Activated CD4-positive, alpha-beta memory T cell treated with anti-CD3 and anti-CD28 coated beads for 36 hours (primary cell): ENCODE measurements at regions of chr17 and their contacts with region 1.

Region 1: DNA sequence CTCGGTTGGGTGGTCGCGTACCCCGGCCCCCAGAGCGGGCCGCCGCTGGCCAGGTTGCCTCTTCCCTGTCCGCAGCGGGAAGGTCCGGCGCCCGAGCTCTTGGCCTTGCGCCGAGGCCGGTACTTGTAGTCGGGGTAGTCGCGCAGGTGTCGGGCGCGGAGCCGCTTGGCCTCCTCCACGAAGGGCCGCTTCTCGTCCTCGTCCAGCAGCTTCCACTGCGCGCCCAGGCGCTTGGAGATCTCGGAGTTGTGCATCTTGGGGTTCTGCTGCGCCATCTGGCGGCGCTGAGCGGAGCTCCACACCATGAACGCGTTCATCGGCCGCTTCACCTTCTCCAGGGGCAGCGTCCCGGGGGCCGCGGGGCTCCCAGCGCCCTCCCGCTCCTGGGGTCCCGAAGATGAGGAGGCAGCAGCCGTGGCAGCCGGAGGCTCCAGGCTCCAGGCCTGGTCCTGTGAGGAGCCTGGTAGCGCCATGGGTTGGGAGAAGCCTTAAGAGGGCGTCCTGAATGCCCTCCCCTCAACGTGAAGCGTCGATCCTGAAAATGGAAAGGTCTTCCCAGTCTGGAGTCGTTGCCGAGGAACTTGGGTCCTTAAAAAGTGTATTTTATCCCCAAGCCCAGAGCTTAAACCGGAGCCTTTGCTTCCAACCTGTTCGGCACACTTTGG is 558 bp downstream of the SOX15 start:
- DNase-seq: peak; percentile 74
- H3K4me3 Mint-ChIP-seq: no peak overlapping the region
- H3K27ac Mint-ChIP-seq: no peak overlapping the region
- H3K4me1 Mint-ChIP-seq: peaks cover 10% of the 10 kb centered on the region
- H3K27me3 Mint-ChIP-seq: no peaks in the 10 kb centered on the region

Region 2: DNA sequence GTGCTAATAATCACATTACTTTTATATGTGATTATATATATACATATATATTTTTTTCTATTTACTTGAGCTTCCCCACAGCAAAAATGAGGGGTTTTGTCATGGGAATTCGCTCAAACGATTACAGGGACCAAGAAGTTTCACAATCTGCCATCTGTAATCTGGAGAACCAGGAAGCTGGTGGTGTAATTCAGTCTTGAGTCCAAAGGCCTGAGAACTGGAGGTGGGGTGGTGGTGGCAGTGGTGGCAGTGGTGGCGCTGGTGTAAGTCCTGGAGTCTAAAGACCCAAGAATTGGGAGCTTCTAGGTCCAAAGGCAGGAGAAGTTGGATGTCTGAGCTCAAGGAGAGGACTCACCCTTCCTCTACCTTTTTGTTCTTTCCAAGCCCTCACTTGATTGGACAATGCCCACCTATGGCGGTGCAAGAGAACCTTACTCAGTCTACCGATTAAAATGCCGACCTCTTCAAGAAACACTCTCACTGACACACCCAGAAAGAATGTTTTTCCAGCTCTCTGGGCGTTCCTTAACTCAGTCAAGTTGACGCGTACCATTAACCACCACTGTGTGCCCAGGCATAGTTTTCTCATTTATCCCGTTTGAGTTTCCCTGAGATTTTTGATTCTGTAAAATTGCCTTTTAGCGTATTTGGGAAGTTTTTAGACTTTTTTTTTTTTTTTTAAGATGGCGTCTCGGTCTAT is 73.3 kb before region 1 on chr17:
- CTCF ChIA-PET with region 1: interaction called, 28 read pairs
- POLR2A ChIA-PET with region 1: no interaction called
- intact Hi-C with region 1: no loop called
- DNase-seq: no peak
- H3K4me3 Mint-ChIP-seq: no peak overlapping the region
- H3K27ac Mint-ChIP-seq: no peak overlapping the region
- H3K4me1 Mint-ChIP-seq: no peaks in the 10 kb centered on the region
- H3K27me3 Mint-ChIP-seq: no peaks in the 10 kb centered on the region

Region 3: GRCh38 chr17:7606280-7606679 is 16.9 kb after region 1 on chr17:
- CTCF ChIA-PET with region 1: interaction called, 10 read pairs
- POLR2A ChIA-PET with region 1: no interaction called
- intact Hi-C with region 1: no loop called
- DNase-seq: no peak
- H3K4me3 Mint-ChIP-seq: no peak overlapping the region
- H3K27ac Mint-ChIP-seq: no peak overlapping the region
- H3K4me1 Mint-ChIP-seq: peaks cover 15% of the 10 kb centered on the region
- H3K27me3 Mint-ChIP-seq: no peaks in the 10 kb centered on the region

Region 4: DNA sequence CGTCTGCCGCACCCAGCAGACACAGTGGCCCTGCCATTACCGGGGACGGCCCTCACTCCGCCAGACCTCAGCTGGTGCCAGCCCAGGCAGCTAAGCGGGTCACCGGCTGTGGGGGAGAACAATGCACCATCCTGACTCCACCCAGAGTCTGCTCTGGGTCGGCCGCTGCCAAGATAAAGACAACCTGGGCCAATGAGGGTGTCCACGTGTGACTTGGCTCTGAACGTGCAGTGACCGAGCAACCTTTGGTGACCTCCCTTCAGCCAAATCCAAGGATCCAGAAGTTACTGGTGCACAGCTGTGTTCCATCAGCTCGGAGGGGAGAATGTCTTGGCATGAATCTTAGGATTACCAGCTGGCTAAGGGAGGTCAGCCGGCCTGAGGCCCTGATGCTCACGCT is 1587.9 kb after region 1 on chr17:
- CTCF ChIA-PET with region 1: no interaction called
- POLR2A ChIA-PET with region 1: no interaction called
- intact Hi-C with region 1: no loop called
- DNase-seq: no peak
- H3K4me3 Mint-ChIP-seq: no peak overlapping the region
- H3K27ac Mint-ChIP-seq: no peak overlapping the region
- H3K4me1 Mint-ChIP-seq: peaks cover 5% of the 10 kb centered on the region
- H3K27me3 Mint-ChIP-seq: peaks cover 1% of the 10 kb centered on the region